CD8-positive, alpha-beta T cell (primary cell): ENCODE measurements at regions of chr6 and their contacts with region 1.

Region 1: DNA sequence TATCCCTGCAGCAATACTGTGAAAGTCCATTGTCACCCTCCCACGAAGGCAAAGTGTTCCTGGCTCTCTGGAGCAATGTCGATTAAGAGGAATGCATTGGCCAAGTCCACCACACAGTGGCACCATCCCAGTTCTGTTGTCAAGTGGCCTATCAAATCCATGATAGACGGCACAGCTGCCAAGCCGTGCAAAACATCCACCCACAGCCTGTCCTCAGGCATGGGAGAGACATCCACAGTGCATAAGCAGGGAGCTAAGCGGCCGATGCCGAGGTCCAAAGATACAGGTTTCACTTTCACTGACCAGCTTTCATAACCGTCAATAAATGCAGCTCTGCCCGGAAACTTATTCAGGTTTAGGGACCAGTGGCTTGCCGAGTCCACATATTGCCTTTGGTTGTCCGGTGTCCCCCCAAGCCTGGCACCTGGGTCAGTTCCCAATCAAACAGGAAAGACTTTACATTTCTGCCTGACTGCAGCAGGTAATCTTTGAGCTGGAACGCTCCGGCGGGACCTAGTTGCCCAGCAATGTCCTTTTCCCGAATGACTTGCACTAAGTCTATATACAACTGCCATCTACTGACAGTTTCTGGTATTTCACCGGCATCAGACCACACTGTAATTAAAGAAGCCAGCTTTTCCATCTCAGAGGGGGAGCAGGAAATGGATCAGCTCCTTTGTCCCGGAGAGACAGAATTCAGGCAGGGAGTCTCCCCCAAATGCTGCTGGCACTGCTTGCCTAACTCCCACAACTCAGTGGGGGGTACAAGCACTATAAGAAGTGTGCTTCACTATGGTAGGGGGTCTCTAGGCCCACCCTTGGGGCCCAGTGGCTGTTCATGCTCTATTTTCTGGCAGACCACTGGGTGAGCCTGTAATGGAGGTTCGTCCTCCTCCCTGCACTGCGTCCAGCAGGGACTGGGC is 6.3 kb downstream of the ZKSCAN3 start:
- DNase-seq: peak in 8 of 9 experiments; percentile 32 to 85 (median 62)
- ATAC-seq: peak; percentile 91
- H3K4me3 ChIP-seq: peak overlapping the region; percentile 39 to 65
- H3K4me3 Mint-ChIP-seq: peak overlapping the region; percentile 90
- H3K27ac ChIP-seq: peak overlapping the region in 1 of 2 experiments; percentile 27
- H3K27ac Mint-ChIP-seq: peak overlapping the region; percentile 52
- H3K4me1 ChIP-seq: peaks cover 17% of the 10 kb centered on the region
- H3K4me1 Mint-ChIP-seq: peaks cover 33% of the 10 kb centered on the region
- H3K27me3 ChIP-seq: no peaks in the 10 kb centered on the region
- H3K27me3 Mint-ChIP-seq: no peaks in the 10 kb centered on the region
- CTCF ChIP-seq: peak; percentile 83

Region 2: DNA sequence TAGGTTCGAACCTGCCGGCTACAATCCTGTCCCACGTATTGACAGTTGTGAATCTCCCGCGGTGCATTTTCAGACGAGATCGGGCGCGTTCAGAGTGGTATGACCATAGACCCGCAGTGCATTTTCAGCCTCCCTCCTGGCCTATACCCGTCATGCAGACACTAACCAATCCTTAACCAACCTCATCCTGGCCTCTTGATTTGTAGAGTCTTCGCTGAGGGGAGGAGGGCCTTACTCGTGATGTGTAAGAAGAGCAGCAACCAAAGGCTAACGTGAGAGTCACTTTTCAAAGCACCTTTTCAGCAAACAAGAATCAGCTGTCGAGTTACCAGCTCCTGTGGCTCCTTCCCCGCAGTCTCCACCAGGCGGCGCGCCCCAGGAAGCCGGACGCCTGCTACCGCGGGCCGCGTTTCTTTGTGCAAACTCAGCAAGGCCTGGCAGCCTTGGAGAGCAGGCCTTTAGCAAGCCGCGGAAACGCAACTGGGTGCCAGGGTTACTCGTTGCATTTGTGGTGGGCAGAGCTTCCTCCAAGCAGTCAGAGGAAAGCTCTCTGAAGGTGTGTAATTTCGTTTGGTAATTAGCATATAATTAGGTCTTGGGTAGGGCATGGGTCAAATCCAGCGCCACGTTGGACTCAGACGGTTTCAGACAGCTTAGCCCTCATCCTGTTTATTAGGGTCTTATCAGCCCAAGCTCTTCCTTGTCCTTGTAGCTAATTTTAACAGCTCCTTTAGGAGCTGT is 583.6 kb before region 1 on chr6:
- CTCF ChIA-PET with region 1: no interaction called
- POLR2A ChIA-PET with region 1: no interaction called
- intact Hi-C with region 1: loop called in 1 of 2 experiments (anchors 10 kb)
- DNase-seq: peak; percentile 76 to 92 (median 84)
- ATAC-seq: peak; percentile 96
- H3K4me3 ChIP-seq: no peak overlapping the region
- H3K4me3 Mint-ChIP-seq: no peak overlapping the region
- H3K27ac ChIP-seq: peak overlapping the region in 1 of 2 experiments; percentile 8
- H3K27ac Mint-ChIP-seq: peak overlapping the region; percentile 56
- H3K4me1 ChIP-seq: peaks cover 11% of the 10 kb centered on the region
- H3K4me1 Mint-ChIP-seq: peaks cover 11% of the 10 kb centered on the region
- H3K27me3 ChIP-seq: no peaks in the 10 kb centered on the region
- H3K27me3 Mint-ChIP-seq: peaks cover 11% of the 10 kb centered on the region
- CTCF ChIP-seq: peak; percentile 85

Region 3: GRCh38 chr6:28161410-28162079 is 194.5 kb before region 1 on chr6:
- CTCF ChIA-PET with region 1: interaction called, 11 read pairs
- POLR2A ChIA-PET with region 1: no interaction called
- intact Hi-C with region 1: no loop called
- DNase-seq: peak; percentile 70 to 90 (median 83)
- ATAC-seq: peak; percentile 98
- H3K4me3 ChIP-seq: peak overlapping the region; percentile 45 to 49
- H3K4me3 Mint-ChIP-seq: peak overlapping the region; percentile 76
- H3K27ac ChIP-seq: peak overlapping the region in 1 of 2 experiments; percentile 4
- H3K27ac Mint-ChIP-seq: no peak overlapping the region
- H3K4me1 ChIP-seq: peaks cover 12% of the 10 kb centered on the region
- H3K4me1 Mint-ChIP-seq: peaks cover 15% of the 10 kb centered on the region
- H3K27me3 ChIP-seq: no peaks in the 10 kb centered on the region
- H3K27me3 Mint-ChIP-seq: peaks cover 4% of the 10 kb centered on the region
- CTCF ChIP-seq: no peak

Region 4: GRCh38 chr6:28368522-28368921 is 12.5 kb after region 1 on chr6:
- CTCF ChIA-PET with region 1: interaction called, 13 read pairs
- POLR2A ChIA-PET with region 1: no interaction called
- intact Hi-C with region 1: no loop called
- DNase-seq: no peak
- ATAC-seq: no peak
- H3K4me3 ChIP-seq: no peak overlapping the region
- H3K4me3 Mint-ChIP-seq: no peak overlapping the region
- H3K27ac ChIP-seq: no peak overlapping the region
- H3K27ac Mint-ChIP-seq: no peak overlapping the region
- H3K4me1 ChIP-seq: no peaks in the 10 kb centered on the region
- H3K4me1 Mint-ChIP-seq: no peaks in the 10 kb centered on the region
- H3K27me3 ChIP-seq: no peaks in the 10 kb centered on the region
- H3K27me3 Mint-ChIP-seq: no peaks in the 10 kb centered on the region
- CTCF ChIP-seq: no peak

Region 5: DNA sequence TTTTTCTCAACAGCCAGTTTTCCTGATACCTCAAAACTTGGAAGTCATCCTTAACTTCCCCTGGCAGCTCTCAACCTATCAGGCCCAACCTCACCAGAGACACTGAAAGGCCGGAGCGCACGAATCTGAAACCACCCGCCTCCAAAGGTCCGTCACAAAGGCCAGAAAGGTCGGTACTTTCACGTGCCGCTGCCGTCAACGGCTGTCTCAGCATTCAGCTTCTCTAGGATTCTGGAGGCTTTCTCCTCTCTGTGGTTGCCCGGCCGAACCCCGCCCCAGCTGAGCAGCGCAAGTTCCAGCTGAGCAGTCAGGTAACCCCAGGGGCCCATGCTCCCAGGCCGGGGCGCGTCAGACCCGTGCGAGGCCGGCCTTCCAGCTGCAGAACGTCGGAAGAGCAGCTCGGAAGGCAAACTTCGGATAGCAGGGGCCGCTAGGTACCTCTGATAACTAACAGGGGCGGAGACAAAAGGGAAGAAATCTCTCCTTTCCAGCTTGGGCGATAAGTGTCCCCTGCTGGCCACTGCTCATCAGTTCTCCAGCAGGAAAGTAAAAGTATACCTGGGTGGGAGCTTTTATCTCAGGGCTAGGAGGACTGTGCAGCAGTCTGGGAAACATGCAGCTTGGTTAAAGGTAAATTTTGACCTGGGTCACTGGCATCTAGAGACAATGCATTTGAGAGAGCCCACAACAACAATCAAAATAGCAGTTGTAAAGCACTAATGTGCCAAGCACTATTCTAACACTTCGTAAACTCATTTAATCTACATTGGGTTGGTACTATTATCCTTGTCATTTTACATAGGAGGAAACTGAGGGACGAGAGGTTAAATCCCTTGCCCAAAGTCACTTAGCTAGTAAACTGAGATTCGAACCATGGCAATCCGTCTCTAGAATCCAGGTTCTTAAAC is 27.5 kb after region 1 on chr6:
- CTCF ChIA-PET with region 1: interaction called, 17 read pairs
- POLR2A ChIA-PET with region 1: no interaction called
- intact Hi-C with region 1: no loop called
- DNase-seq: peak in 7 of 9 experiments; percentile 2 to 64 (median 35)
- ATAC-seq: peak; percentile 62
- H3K4me3 ChIP-seq: peak overlapping the region; percentile 9 to 17
- H3K4me3 Mint-ChIP-seq: peak overlapping the region; percentile 75
- H3K27ac ChIP-seq: peak overlapping the region in 1 of 2 experiments; percentile 17
- H3K27ac Mint-ChIP-seq: peak overlapping the region; percentile 24
- H3K4me1 ChIP-seq: no peaks in the 10 kb centered on the region
- H3K4me1 Mint-ChIP-seq: peaks cover 19% of the 10 kb centered on the region
- H3K27me3 ChIP-seq: no peaks in the 10 kb centered on the region
- H3K27me3 Mint-ChIP-seq: no peaks in the 10 kb centered on the region
- CTCF ChIP-seq: no peak